Endothelial cell of umbilical vein (primary cell): ENCODE measurements at regions of chr9 and their contacts with region 1.

Region 1: GRCh38 chr9:112858625-112859147 is 32.0 kb downstream of the SLC46A2 start:
- DNase-seq: no peak
- H3K4me3 ChIP-seq: no peak overlapping the region
- H3K27ac ChIP-seq: no peak overlapping the region
- H3K4me1 ChIP-seq: no peaks in the 10 kb centered on the region
- H3K27me3 ChIP-seq: no peaks in the 10 kb centered on the region
- CTCF ChIP-seq: no peak
- POLR2A ChIP-seq: no peak

Region 2: GRCh38 chr9:112844771-112845542 is 13.7 kb before region 1 on chr9:
- CTCF ChIA-PET with region 1: interaction called, 22 read pairs
- POLR2A ChIA-PET with region 1: no interaction called
- dilution Hi-C with region 1: no loop called
- intact Hi-C with region 1: no loop called
- DNase-seq: peak; percentile 71
- H3K4me3 ChIP-seq: no peak overlapping the region
- H3K27ac ChIP-seq: no peak overlapping the region
- H3K4me1 ChIP-seq: peaks cover 5% of the 10 kb centered on the region
- H3K27me3 ChIP-seq: no peaks in the 10 kb centered on the region
- CTCF ChIP-seq: peak; percentile 92 to 98
- POLR2A ChIP-seq: no peak